Transverse colon (tissue), 4 donors: ENCODE measurements at regions of chr13 and their contacts with region 1.

Region 1: DNA sequence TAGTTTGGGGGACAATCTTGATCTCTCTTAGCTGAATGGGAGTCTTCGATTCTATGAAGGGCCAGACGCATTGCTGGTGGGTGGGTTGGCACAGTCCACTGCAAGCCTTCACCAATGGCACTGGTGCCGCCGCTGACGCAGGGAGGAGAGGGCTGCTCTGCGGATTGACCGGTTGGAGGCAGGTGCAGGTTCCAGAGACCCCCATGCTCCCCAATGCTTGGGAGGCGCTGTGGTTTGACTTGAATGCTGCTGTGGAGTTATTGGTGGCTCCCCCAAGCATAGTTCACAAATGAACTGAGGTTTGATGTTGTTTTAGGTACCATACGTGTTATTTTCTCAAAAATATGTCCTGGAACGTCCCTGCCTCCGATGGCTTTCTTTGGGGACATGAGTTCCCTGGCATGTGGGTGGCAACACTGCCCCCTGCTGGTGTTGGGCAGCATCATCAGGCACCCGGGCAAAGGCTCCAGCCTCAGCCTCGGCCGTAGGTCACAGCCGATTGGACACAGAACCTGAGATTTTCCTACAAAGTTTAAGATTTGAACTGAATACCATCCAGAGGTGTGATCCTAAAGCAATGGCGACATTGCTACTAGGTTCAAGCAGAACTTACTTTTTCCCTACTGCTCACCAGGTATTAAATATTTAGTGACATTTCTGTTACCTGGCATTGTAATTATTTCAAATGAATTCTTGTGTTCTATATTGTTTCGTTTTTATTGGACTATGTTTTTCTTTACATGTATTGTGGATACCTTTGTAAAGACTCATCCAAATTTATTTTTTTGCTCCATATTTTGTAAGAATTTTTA is 95.5 kb downstream of the ANKRD10 start:
- DNase-seq: peak; percentile 84
- H3K4me3 ChIP-seq: no peak overlapping the region
- H3K27ac ChIP-seq: no peak overlapping the region
- H3K4me1 ChIP-seq: no peaks in the 10 kb centered on the region
- H3K27me3 ChIP-seq: no peaks in the 10 kb centered on the region
- CTCF ChIP-seq: peak; percentile 93 to 98 (median 98)
- EP300 ChIP-seq: no peak
- POLR2A ChIP-seq: no peak

Region 2: GRCh38 chr13:110455941-110456340 is 363.5 kb before region 1 on chr13:
- in situ Hi-C with region 1: loop called in 1 of 4 experiments (anchors 25 kb)
- intact Hi-C with region 1: no loop called
- DNase-seq: peak; percentile 83
- H3K4me3 ChIP-seq: no peak overlapping the region
- H3K27ac ChIP-seq: peak overlapping the region in 2 of 4 donors; percentile 4 to 15
- H3K4me1 ChIP-seq: peaks cover 0 to 6% (median 3%) of the 10 kb centered on the region in 4 donors
- H3K27me3 ChIP-seq: no peaks in the 10 kb centered on the region
- CTCF ChIP-seq: peak; percentile 77 to 90 (median 80)
- EP300 ChIP-seq: no peak
- POLR2A ChIP-seq: no peak

Region 3: DNA sequence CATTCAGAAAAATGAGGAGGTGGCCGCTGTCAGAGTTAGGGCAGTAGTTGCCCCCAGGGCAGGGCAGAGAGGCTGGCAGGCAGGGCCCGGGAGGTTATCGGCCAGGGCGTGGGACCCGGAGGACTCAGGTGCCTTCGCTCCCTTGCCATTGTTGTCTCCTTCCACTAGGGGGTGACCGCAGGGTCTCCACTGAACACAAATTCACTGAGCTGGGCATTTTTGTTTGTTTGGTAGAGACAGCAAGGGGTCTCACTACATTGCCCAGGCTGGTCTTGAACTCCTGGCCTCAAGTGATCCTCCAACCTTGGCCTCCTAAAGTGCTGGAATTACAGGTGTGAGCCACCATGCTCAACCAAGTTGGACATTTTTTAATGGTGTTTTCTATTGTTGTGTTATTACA is 138.6 kb before region 1 on chr13:
- in situ Hi-C with region 1: loop called in 2 of 4 experiments (anchors 25 kb)
- intact Hi-C with region 1: loop called (anchors 10 kb)
- DNase-seq: no peak
- H3K4me3 ChIP-seq: no peak overlapping the region
- H3K27ac ChIP-seq: no peak overlapping the region
- H3K4me1 ChIP-seq: peaks cover 0 to 13% (median 0%) of the 10 kb centered on the region in 4 donors
- H3K27me3 ChIP-seq: no peaks in the 10 kb centered on the region
- CTCF ChIP-seq: peak; percentile 23 to 30 (median 25)
- EP300 ChIP-seq: no peak
- POLR2A ChIP-seq: no peak